ENCODE measurements at regions of chr2 and their contacts with region 1.

Region 1: GRCh38 chr2:85053802-85054201 is 79.4 kb upstream of the TCF7L1 start:
- DNase-seq: no peak
- ATAC-seq: peak; percentile 34
- H3K4me3 Mint-ChIP-seq: no peak overlapping the region
- H3K27ac Mint-ChIP-seq: peak overlapping the region; percentile 26
- H3K4me1 Mint-ChIP-seq: peaks cover 25% of the 10 kb centered on the region
- H3K27me3 Mint-ChIP-seq: no peaks in the 10 kb centered on the region
- CTCF ChIP-seq: no peak

Region 2: GRCh38 chr2:85066874-85067351 is 13.1 kb after region 1 on chr2:
- CTCF ChIA-PET with region 1: interaction called, 14 read pairs
- POLR2A ChIA-PET with region 1: no interaction called
- intact Hi-C with region 1: no loop called
- DNase-seq: peak; percentile 81
- ATAC-seq: peak; percentile 82
- H3K4me3 Mint-ChIP-seq: no peak overlapping the region
- H3K27ac Mint-ChIP-seq: no peak overlapping the region
- H3K4me1 Mint-ChIP-seq: peaks cover 4% of the 10 kb centered on the region
- H3K27me3 Mint-ChIP-seq: peaks cover 15% of the 10 kb centered on the region
- CTCF ChIP-seq: peak; percentile 70